ENCODE measurements at regions of chr1 and their contacts with region 1.

Region 1: DNA sequence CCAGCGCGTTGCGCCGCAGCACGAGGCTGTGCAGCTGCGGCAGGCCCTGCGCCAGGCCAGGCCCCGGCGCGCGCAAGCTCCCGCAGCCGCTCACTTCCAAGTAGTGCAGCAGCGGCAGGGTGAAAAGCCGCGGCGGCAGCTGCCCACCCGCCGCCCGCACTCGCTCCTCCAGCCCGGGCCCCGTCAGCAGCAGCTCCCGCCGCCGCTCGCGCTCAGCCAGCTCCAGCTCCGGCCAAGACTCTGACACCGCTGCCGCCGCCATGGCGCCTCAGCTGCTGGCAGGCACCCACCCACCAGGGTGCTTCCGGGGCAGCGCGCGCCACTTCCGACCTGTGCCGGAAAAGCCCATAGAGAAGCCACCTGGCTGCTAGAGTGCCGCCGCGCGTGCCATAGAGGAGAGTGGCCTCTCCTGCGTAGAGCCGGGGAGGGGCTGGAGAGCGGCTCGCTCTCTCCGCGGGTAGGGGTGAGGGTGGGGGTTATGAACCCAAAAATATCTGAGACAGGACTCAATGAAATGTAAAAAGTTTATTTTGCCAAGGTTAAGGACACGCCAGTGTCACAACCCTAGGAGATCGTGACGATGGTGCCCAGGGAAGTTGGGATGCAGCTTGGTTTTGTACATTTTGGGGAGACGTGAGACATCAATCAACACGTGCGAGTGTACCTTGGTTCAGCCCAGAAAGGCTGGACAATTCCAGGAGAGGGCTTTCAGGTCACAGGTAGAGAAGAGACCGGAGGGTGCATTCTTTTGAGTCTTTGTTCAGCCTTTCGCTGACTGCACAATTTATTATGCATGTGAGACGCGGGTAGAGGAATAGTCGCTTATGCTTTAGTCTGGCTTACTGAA is at the start of gene LRRC47:
- DNase-seq: peak; percentile 97
- H3K4me3 Mint-ChIP-seq: peak within 1 kb of the TSS; percentile 90
- H3K27ac Mint-ChIP-seq: peak within 1 kb of the TSS; percentile 93
- H3K4me1 Mint-ChIP-seq: peaks cover 44% of the 10 kb centered on the region
- H3K27me3 Mint-ChIP-seq: peaks cover 21% of the 10 kb centered on the region

Region 2: DNA sequence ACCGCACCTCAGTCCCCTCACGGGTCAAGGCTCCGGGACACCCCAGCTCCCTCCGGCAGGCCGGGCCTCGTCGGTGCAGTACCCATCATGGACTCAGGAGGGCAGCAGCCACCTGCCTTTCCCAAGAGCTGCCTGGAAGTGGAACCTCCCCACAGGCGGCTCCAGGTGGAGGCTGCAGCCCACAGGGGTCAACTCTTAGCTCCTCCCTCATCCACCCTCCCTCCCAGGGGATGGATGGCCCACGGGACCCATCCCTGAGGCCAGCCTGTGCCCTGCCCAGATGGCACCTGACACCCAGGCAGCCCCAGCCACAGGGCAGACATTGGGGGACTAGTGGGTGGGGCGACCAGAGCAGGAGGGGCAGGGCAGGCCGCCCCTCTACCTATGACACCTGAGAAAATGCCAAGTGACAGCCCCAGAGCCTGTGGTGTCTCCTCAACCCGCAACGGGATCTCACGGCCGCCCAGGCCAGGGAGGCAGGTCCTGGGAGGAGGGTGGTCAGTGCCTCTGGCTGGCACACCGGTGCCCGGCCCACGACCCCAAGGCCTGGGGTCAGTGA is 343.2 kb before region 1 on chr1:
- CTCF ChIA-PET with region 1: no interaction called
- DNase-seq: peak; percentile 80
- H3K4me3 Mint-ChIP-seq: peak overlapping the region; percentile 40
- H3K27ac Mint-ChIP-seq: no peak overlapping the region
- H3K4me1 Mint-ChIP-seq: peaks cover 2% of the 10 kb centered on the region
- H3K27me3 Mint-ChIP-seq: peaks cover 59% of the 10 kb centered on the region

Region 3: DNA sequence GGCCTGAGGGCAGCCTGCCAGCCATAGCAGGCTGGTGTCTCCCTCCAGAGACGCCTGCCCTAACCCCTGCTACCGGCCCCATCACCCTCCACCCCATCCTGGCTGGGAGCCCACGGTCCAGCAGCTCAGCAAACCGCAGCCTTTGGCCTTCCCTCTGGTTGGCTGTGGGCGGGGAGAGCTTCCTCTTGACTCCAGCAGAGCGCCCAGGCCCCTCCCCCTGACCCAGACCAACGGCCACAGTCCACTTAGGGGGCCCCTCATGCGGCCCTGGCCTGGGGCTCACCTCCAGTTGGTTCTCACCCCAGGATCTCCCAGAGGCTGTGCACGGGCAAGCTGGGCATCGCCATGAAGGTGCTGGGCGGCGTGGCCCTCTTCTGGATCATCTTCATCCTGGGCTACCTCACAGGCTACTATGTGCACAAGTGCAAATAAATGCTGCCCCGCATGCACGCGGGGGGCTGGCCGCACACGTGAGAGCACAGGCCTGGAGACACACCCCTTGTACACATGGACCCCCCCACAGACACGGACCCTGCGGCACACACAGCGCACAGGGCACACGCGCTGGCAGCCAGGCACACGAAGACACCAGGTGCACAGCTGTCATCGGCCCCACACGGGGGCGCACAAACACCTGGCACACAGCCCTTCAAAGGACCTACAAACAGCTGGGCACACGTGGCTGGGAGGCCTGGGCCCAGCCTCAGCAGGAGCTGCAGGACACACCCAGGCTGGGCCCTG is 20.8 kb before region 1 on chr1:
- CTCF ChIA-PET with region 1: interaction called, 12 read pairs
- DNase-seq: peak; percentile 69
- H3K4me3 Mint-ChIP-seq: no peak overlapping the region
- H3K27ac Mint-ChIP-seq: no peak overlapping the region
- H3K4me1 Mint-ChIP-seq: peaks cover 8% of the 10 kb centered on the region
- H3K27me3 Mint-ChIP-seq: peaks cover 31% of the 10 kb centered on the region

Region 4: GRCh38 chr1:3811595-3811911 is 15.1 kb after region 1 on chr1:
- CTCF ChIA-PET with region 1: no interaction called
- DNase-seq: no peak
- H3K4me3 Mint-ChIP-seq: no peak overlapping the region
- H3K27ac Mint-ChIP-seq: no peak overlapping the region
- H3K4me1 Mint-ChIP-seq: no peaks in the 10 kb centered on the region
- H3K27me3 Mint-ChIP-seq: no peaks in the 10 kb centered on the region